PC-3 (cell line): ENCODE measurements at regions of chr3 and their contacts with region 1.

Region 1: GRCh38 chr3:71064288-71064955 is 519.1 kb downstream of the FOXP1 start:
- DNase-seq: peak; percentile 57
- ATAC-seq: peak; percentile 35
- H3K4me3 ChIP-seq: peak overlapping the region; percentile 71
- H3K27ac ChIP-seq: peak overlapping the region; percentile 76
- H3K4me1 ChIP-seq: peaks cover 62% of the 10 kb centered on the region
- H3K27me3 ChIP-seq: no peaks in the 10 kb centered on the region
- CTCF ChIP-seq: no peak

Region 2: DNA sequence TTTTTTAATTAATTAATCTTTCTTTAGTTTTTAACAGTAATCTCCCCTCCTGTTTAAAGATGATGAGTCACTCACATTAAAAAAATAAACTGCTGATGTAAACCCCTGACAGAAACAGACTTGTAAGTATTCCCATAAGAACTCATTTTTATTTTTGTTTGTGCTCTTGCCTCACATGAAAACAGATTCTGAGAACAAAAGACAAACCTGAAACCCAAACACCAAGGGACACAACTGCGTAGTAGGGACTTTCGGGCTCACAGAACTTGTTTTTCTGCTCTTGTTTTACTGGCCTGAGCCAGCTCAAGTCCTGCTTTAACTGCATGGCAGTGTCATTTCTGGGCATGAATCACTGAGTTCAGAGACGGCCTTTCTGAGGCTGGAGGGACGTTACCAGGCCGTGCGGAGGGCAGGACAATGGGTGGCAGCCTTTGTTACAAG is 81.7 kb before region 1 on chr3:
- CTCF ChIA-PET with region 1: no interaction called
- POLR2A ChIA-PET with region 1: interaction called, 3 read pairs
- intact Hi-C with region 1: loop called (anchors 2 kb)
- DNase-seq: peak; percentile 97
- ATAC-seq: peak; percentile 98
- H3K4me3 ChIP-seq: peak overlapping the region; percentile 55
- H3K27ac ChIP-seq: peak overlapping the region; percentile 92
- H3K4me1 ChIP-seq: peaks cover 29% of the 10 kb centered on the region
- H3K27me3 ChIP-seq: no peaks in the 10 kb centered on the region
- CTCF ChIP-seq: no peak

Region 3: GRCh38 chr3:71016178-71016845 is 48.1 kb before region 1 on chr3:
- CTCF ChIA-PET with region 1: no interaction called
- POLR2A ChIA-PET with region 1: no interaction called
- intact Hi-C with region 1: no loop called
- DNase-seq: no peak
- ATAC-seq: no peak
- H3K4me3 ChIP-seq: no peak overlapping the region
- H3K27ac ChIP-seq: no peak overlapping the region
- H3K4me1 ChIP-seq: peaks cover 9% of the 10 kb centered on the region
- H3K27me3 ChIP-seq: no peaks in the 10 kb centered on the region
- CTCF ChIP-seq: no peak

Region 4: GRCh38 chr3:71026634-71027578 is 37.5 kb before region 1 on chr3:
- CTCF ChIA-PET with region 1: interaction called, 3 read pairs
- POLR2A ChIA-PET with region 1: no interaction called
- intact Hi-C with region 1: loop called (anchors 2 kb)
- DNase-seq: peak; percentile 73
- ATAC-seq: peak; percentile 83
- H3K4me3 ChIP-seq: no peak overlapping the region
- H3K27ac ChIP-seq: peak overlapping the region; percentile 77
- H3K4me1 ChIP-seq: peaks cover 44% of the 10 kb centered on the region
- H3K27me3 ChIP-seq: no peaks in the 10 kb centered on the region
- CTCF ChIP-seq: no peak

Region 5: GRCh38 chr3:71048946-71049345 is 15.5 kb before region 1 on chr3:
- CTCF ChIA-PET with region 1: no interaction called
- POLR2A ChIA-PET with region 1: interaction called, 5 read pairs
- intact Hi-C with region 1: loop called (anchors 1 kb)
- DNase-seq: peak; percentile 82
- ATAC-seq: peak; percentile 85
- H3K4me3 ChIP-seq: peak overlapping the region; percentile 26
- H3K27ac ChIP-seq: peak overlapping the region; percentile 91
- H3K4me1 ChIP-seq: peaks cover 56% of the 10 kb centered on the region
- H3K27me3 ChIP-seq: no peaks in the 10 kb centered on the region
- CTCF ChIP-seq: no peak

Region 6: GRCh38 chr3:71208211-71209108 is 144.0 kb after region 1 on chr3:
- CTCF ChIA-PET with region 1: no interaction called
- POLR2A ChIA-PET with region 1: no interaction called
- intact Hi-C with region 1: loop called (anchors 5 kb)
- DNase-seq: peak; percentile 87
- ATAC-seq: peak; percentile 79
- H3K4me3 ChIP-seq: no peak overlapping the region
- H3K27ac ChIP-seq: peak overlapping the region; percentile 64
- H3K4me1 ChIP-seq: peaks cover 38% of the 10 kb centered on the region
- H3K27me3 ChIP-seq: no peaks in the 10 kb centered on the region
- CTCF ChIP-seq: no peak

Region 7: GRCh38 chr3:71428841-71429596 is 364.6 kb after region 1 on chr3:
- CTCF ChIA-PET with region 1: no interaction called
- POLR2A ChIA-PET with region 1: no interaction called
- intact Hi-C with region 1: loop called (anchors 10 kb)
- DNase-seq: no peak
- ATAC-seq: no peak
- H3K4me3 ChIP-seq: no peak overlapping the region
- H3K27ac ChIP-seq: no peak overlapping the region
- H3K4me1 ChIP-seq: peaks cover 28% of the 10 kb centered on the region
- H3K27me3 ChIP-seq: no peaks in the 10 kb centered on the region
- CTCF ChIP-seq: no peak